Calu3 (cell line): ENCODE measurements at regions of chr12 and their contacts with region 1.

Region 1: GRCh38 chr12:65536876-65537661 is 258.6 kb downstream of the MSRB3 start:
- DNase-seq: peak; percentile 82
- H3K4me3 Mint-ChIP-seq: peak overlapping the region; percentile 8
- H3K27ac Mint-ChIP-seq: peak overlapping the region; percentile 42
- H3K4me1 Mint-ChIP-seq: peaks cover 59% of the 10 kb centered on the region
- H3K27me3 Mint-ChIP-seq: no peaks in the 10 kb centered on the region
- CTCF ChIP-seq: no peak

Region 2: DNA sequence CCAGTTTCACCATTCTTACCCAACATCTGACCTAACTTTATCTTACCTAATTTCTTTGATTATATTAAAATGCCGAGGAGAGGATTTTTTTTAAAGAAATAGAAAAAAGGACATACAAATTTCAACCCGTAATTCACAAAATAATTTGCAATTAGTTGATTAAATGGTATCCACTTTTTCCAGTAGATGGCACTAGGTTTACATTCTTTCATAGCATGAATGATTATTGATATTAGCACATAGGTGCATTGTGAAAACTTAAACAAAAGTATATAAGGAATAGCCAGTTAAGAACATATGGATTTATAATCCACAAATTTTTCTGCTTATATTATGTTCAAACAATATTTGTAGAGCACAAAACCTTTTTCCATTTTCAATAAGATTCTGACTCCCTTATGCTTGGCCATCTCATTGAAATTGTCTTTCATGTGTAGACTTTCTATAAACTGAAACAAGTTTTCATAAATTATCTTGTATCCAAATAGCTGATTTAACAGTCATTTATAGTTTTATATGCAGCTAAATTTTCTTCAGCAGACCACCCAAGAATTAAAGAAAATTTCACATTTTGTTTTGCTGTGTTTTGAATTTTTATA is 223.3 kb before region 1 on chr12:
- CTCF ChIA-PET with region 1: interaction called, 3 read pairs
- intact Hi-C with region 1: loop called (anchors 10 kb)
- DNase-seq: no peak
- H3K4me3 Mint-ChIP-seq: no peak overlapping the region
- H3K27ac Mint-ChIP-seq: no peak overlapping the region
- H3K4me1 Mint-ChIP-seq: peaks cover 6% of the 10 kb centered on the region
- H3K27me3 Mint-ChIP-seq: no peaks in the 10 kb centered on the region
- CTCF ChIP-seq: peak; percentile 43

Region 3: DNA sequence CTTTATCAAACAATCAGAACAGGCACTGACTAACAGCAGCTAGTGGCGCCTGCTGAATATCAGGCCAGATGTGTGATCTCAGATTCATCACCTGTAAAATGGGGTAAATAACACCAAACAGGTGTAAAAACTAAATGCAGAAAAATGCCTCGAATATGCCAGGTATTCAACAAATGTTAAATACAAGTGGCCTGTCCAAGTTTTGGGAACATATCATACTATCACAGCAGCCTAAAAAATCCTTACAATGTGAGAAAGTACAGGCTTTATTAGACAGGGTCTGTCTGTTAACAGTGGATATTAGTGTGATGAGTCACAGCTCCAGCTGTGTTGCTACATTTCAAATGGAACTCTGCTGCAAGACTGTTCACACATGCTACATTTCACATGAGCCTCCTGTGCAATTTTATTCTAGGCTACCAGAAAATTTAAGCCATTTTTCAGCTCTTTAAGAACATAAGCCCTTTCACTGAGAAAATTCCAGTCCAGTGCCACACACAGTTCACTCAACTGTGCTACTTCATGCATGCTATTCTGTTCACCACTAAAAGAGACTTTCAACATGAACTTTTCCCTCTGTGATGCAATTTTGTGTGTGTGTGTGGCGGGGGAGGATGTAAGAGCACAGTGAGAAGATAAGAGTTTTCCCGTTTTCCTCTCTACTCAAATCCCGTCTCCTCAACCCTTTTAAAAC is 201.9 kb before region 1 on chr12:
- CTCF ChIA-PET with region 1: no interaction called
- intact Hi-C with region 1: loop called (anchors 5 kb)
- DNase-seq: peak; percentile 15
- H3K4me3 Mint-ChIP-seq: no peak overlapping the region
- H3K27ac Mint-ChIP-seq: peak overlapping the region; percentile 27
- H3K4me1 Mint-ChIP-seq: peaks cover 15% of the 10 kb centered on the region
- H3K27me3 Mint-ChIP-seq: no peaks in the 10 kb centered on the region
- CTCF ChIP-seq: no peak

Region 4: DNA sequence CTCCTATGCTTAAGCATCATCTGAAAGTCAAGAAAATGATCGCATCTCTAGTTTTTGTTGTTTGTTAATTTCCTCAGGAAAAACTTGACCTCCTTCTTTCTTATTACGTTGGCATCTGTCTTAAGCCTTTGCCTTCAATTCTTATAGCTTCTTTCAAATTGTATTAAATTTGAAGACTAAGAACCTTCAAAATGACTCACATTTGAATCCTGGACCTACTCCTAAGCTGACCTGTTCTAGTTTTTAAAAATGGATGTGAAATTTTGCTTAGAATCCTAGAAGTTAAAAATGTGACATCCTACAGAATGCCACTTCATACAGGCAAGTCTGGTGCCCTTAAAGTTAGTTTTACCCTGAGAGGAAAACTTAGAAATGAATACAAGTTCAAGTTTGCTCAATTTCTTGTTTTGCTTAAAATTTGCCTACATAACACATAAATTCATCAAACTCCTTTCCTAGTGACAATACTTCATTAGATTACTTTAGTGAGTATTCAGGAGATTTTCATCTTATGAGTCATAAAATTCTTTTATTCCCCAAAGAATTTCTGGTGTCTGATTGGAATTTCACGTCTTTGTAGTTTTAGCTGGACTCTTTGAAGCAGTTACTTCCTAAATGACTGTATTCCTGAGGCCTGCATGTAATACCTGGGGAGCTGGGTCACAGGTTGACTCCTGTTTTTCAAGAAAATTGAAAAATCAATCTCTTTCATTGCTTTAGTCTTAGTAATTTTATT is 106.3 kb before region 1 on chr12:
- CTCF ChIA-PET with region 1: interaction called, 3 read pairs
- intact Hi-C with region 1: loop called (anchors 2 kb)
- DNase-seq: peak; percentile 26
- H3K4me3 Mint-ChIP-seq: no peak overlapping the region
- H3K27ac Mint-ChIP-seq: peak overlapping the region; percentile 20
- H3K4me1 Mint-ChIP-seq: peaks cover 57% of the 10 kb centered on the region
- H3K27me3 Mint-ChIP-seq: no peaks in the 10 kb centered on the region
- CTCF ChIP-seq: no peak

Region 5: DNA sequence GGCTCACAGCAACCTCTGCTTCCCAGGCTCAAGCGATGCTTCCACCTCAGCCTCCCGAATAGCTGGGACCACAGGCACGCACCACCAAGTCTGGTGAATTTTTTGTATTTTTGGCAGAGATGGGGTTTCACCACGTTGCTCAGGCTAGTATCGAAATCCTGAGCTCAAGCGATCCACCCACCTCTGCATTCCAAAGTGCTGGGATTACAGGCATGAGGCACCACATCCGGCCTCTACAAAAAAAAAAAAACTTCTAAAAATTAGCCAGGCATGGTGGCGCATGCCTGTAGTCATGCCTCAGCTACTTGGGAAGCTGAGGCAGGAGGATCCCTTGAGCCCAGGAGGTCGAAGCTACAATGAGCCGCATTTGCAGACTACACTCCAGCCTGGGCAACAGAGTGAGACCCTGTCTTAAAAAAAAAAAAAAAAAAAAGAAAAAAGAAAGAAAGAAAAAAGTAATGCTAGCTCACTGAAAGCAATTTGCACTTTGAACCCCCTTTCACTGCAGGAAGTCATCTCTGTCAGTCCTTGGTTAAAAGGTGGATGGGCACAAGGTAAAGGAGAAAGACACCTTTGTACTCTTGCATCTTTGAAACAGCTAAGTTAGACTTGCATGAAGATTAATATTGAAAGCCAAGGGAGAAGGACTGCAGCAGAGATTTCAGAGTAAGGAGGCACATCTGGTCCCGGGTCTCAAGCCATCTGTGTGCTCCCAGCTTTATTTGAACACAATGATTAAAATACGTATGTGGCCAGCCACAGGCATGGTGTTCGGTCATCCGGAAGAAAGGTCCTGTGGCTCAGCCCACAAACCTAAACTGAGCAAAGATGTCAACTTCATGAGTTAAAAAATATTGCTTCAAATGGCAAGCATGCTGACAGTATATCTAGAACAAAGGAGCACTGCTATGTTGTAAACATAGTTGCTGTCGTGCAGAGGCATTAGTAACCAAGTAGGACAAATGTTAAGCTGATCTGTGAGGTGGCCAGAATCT is 183.4 kb after region 1 on chr12:
- CTCF ChIA-PET with region 1: no interaction called
- intact Hi-C with region 1: no loop called
- DNase-seq: no peak
- H3K4me3 Mint-ChIP-seq: no peak overlapping the region
- H3K27ac Mint-ChIP-seq: no peak overlapping the region
- H3K4me1 Mint-ChIP-seq: no peaks in the 10 kb centered on the region
- H3K27me3 Mint-ChIP-seq: no peaks in the 10 kb centered on the region
- CTCF ChIP-seq: no peak